Activated naive CD8-positive, alpha-beta T cell treated with anti-CD3 and anti-CD28 coated beads, Interleukin-2, amount 10 ng/mL, durations not matched to agents 7 days and 5 days (primary cell): ENCODE measurements at regions of chr11 and their contacts with region 1.

Region 1: DNA sequence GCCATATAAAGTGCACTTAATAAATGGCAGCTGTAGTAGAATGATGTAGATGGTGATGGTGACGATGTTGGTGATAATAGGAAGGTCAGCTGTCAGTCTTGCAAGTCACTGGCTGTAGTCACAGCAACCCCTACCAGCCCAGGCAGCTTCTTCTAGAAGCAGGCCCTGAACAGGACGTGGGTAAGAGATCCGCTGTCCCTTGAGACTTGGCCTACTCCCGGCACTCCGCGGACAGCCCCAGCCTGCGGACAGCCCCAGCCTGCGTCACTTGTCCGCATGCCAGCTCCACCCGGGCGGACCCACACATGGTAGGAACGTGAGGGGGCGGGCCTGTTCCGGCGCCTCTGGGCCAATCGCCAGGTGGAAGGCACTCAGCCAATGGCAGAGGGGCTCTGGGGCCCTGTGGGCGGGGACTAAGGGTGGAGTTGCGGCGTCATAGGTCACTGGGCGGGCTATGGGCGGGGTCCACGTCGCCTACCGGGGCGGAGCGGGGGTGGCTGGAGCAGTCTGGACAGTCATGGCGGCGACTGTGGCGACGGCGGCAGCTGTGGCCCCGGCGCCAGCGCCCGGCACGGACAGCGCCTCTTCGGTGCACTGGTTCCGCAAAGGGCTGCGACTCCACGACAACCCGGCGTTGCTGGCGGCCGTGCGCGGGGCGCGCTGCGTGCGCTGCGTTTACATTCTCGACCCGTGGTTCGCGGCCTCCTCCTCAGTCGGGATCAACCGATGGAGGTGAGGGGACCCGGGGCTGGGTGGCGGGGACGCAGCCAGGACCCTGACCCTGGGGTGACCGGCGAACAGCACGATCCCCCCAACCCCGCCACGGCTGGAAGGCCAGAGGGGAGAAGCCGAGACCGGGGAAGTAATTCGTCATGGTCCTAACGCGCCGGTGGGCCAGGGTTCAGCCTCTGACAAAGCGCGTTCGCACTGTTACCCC is at the start of gene CRY2:
- DNase-seq: peak; percentile 96
- ATAC-seq: peak; percentile 90
- H3K4me3 Mint-ChIP-seq: peak within 1 kb of the TSS; percentile 88
- H3K27ac Mint-ChIP-seq: peak within 1 kb of the TSS; percentile 86
- H3K4me1 Mint-ChIP-seq: peaks cover 43% of the 10 kb centered on the region
- H3K27me3 Mint-ChIP-seq: peaks cover 14% of the 10 kb centered on the region
- total RNA-seq, gene CRY2: 32.4 to 36.9 TPM

Region 2: DNA sequence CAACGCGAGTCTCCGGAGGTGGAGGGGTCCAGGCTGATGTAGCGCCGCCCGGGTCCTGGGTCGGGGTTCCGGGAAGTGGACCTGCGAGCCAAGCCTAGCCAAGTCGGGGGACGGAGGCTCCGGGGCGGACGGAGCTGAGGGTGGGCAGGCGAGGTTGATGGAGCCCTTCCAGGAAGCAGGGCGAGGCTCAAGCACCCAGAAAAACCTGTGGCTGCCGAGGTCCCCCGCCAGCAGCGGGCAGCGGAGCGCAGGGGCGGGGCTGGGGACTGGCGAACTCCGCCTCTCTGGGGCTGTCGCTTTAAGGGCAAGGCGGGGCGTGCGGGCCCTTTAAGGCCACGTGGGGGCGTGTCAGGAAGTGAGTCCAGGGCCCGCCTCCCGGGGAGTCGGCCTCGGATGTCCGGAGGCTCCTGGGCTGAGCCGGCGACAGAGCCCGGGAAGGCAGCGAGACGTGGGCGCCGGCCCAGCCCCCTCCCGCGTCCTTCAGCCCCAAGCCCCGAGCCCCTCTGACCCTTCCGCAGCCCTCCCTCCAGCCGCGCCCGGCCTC is 42.4 kb before region 1 on chr11 and contains the start of gene SLC35C1:
- POLR2A ChIA-PET with region 1: interaction called, 16 read pairs
- DNase-seq: peak; percentile 98
- ATAC-seq: peak; percentile 89
- H3K4me3 Mint-ChIP-seq: peak within 1 kb of the TSS; percentile 97
- H3K27ac Mint-ChIP-seq: peak within 1 kb of the TSS; percentile 92
- H3K4me1 Mint-ChIP-seq: peaks cover 35% of the 10 kb centered on the region
- H3K27me3 Mint-ChIP-seq: no peaks in the 10 kb centered on the region
- total RNA-seq, gene SLC35C1: 18.0 to 20.2 TPM